ENCODE measurements at regions of chr11 and their contacts with region 1.

Region 1: DNA sequence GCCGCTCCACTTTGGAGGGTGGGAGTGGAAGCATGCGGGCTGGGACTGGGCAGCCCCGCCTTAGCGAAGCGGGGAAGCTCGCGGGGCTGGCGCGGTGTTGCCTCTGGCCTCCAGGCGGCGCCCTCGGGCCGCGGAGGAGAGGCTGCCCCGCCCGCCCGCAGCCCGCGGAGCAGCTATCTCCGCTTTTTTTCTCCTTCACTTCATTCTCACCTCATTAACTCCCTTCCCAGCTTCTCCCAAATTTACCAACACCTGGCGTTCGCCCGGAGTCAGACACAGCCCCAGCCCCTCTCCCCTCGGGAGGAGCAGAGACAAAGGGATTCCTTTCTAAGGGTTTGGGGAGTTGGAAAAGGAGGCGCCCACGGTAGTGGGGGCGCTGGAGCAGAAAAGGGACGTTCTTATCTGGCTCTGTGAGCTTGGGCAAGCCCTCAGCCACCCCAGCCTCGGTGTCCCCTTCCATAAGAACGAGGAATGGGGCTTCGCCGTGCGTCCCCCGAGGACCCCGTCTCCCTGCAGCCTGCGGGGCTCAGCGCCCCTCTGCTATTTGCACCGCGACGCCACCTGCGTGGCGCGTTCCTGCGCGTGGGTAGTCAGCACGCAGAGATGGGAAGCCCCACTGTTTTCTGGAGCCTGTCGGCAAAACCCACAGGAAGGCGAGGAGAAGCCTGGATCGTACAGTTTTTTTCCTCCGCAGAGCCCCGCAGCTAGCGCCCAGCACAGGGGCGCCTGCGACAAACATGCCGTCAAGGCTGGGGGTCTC is 1.5 kb upstream of the WNT11 start:
- DNase-seq: peak; percentile 91 to 96
- H3K4me3 ChIP-seq: peak overlapping the region; percentile 70
- H3K4me3 Mint-ChIP-seq: peak overlapping the region; percentile 85
- H3K27ac Mint-ChIP-seq: peak overlapping the region; percentile 5
- H3K4me1 ChIP-seq: peaks cover 14% of the 10 kb centered on the region
- H3K4me1 Mint-ChIP-seq: peaks cover 22% of the 10 kb centered on the region
- H3K27me3 ChIP-seq: peaks cover 3% of the 10 kb centered on the region; the same call in 1 of the 2 replicates
- H3K27me3 Mint-ChIP-seq: peaks cover 10% of the 10 kb centered on the region
- CTCF ChIP-seq: peak; percentile 97 to 99

Region 2: GRCh38 chr11:75814686-75815344 is 393.0 kb before region 1 on chr11 and contains the start of gene UVRAG:
- CTCF ChIA-PET with region 1: interaction called, 3 read pairs
- POLR2A ChIA-PET with region 1: no interaction called
- intact Hi-C with region 1: loop called (anchors 5 kb)
- DNase-seq: peak; percentile 100
- H3K4me3 ChIP-seq: peak within 1 kb of the TSS; percentile 69
- H3K4me3 Mint-ChIP-seq: no peak within 1 kb of the TSS
- H3K27ac Mint-ChIP-seq: no peak within 1 kb of the TSS
- H3K4me1 ChIP-seq: peaks cover 10% of the 10 kb centered on the region
- H3K4me1 Mint-ChIP-seq: peaks cover 8% of the 10 kb centered on the region
- H3K27me3 ChIP-seq: no peaks in the 10 kb centered on the region
- H3K27me3 Mint-ChIP-seq: no peaks in the 10 kb centered on the region
- CTCF ChIP-seq: peak in 1 of 2 experiments; percentile 23
- total RNA-seq, gene UVRAG: 30.4 and 31.3 TPM in 2 replicates

Region 3: GRCh38 chr11:75982309-75982708 is 225.5 kb before region 1 on chr11:
- CTCF ChIA-PET with region 1: no interaction called
- POLR2A ChIA-PET with region 1: no interaction called
- intact Hi-C with region 1: no loop called
- DNase-seq: no peak
- H3K4me3 ChIP-seq: no peak overlapping the region
- H3K4me3 Mint-ChIP-seq: no peak overlapping the region
- H3K27ac Mint-ChIP-seq: no peak overlapping the region
- H3K4me1 ChIP-seq: no peaks in the 10 kb centered on the region
- H3K4me1 Mint-ChIP-seq: peaks cover 8% of the 10 kb centered on the region
- H3K27me3 ChIP-seq: no peaks in the 10 kb centered on the region
- H3K27me3 Mint-ChIP-seq: no peaks in the 10 kb centered on the region
- CTCF ChIP-seq: no peak

Region 4: GRCh38 chr11:76102802-76103201 is 105.0 kb before region 1 on chr11:
- CTCF ChIA-PET with region 1: no interaction called
- POLR2A ChIA-PET with region 1: no interaction called
- intact Hi-C with region 1: no loop called
- DNase-seq: no peak
- H3K4me3 ChIP-seq: no peak overlapping the region
- H3K4me3 Mint-ChIP-seq: no peak overlapping the region
- H3K27ac Mint-ChIP-seq: no peak overlapping the region
- H3K4me1 ChIP-seq: no peaks in the 10 kb centered on the region
- H3K4me1 Mint-ChIP-seq: peaks cover 7% of the 10 kb centered on the region
- H3K27me3 ChIP-seq: no peaks in the 10 kb centered on the region
- H3K27me3 Mint-ChIP-seq: no peaks in the 10 kb centered on the region
- CTCF ChIP-seq: no peak

Region 5: GRCh38 chr11:76152086-76152681 is 55.6 kb before region 1 on chr11:
- CTCF ChIA-PET with region 1: interaction called, 8 read pairs
- POLR2A ChIA-PET with region 1: interaction called, 3 read pairs
- intact Hi-C with region 1: loop called (anchors 2 kb)
- DNase-seq: peak; percentile 67 to 77
- H3K4me3 ChIP-seq: no peak overlapping the region
- H3K4me3 Mint-ChIP-seq: peak overlapping the region; percentile 56
- H3K27ac Mint-ChIP-seq: peak overlapping the region; percentile 90
- H3K4me1 ChIP-seq: peaks cover 79% of the 10 kb centered on the region
- H3K4me1 Mint-ChIP-seq: peaks cover 63% of the 10 kb centered on the region
- H3K27me3 ChIP-seq: no peaks in the 10 kb centered on the region
- H3K27me3 Mint-ChIP-seq: no peaks in the 10 kb centered on the region
- CTCF ChIP-seq: peak in 1 of 2 experiments; percentile 29

Region 6: GRCh38 chr11:76318744-76319384 is 111.0 kb after region 1 on chr11:
- CTCF ChIA-PET with region 1: interaction called, 170 read pairs
- POLR2A ChIA-PET with region 1: interaction called, 4 read pairs
- intact Hi-C with region 1: loop called (anchors 1 kb)
- DNase-seq: peak; percentile 90 to 94
- H3K4me3 ChIP-seq: no peak overlapping the region
- H3K4me3 Mint-ChIP-seq: no peak overlapping the region
- H3K27ac Mint-ChIP-seq: no peak overlapping the region
- H3K4me1 ChIP-seq: peaks cover 12% of the 10 kb centered on the region
- H3K4me1 Mint-ChIP-seq: no peaks in the 10 kb centered on the region
- H3K27me3 ChIP-seq: no peaks in the 10 kb centered on the region
- H3K27me3 Mint-ChIP-seq: no peaks in the 10 kb centered on the region
- CTCF ChIP-seq: peak; percentile 99

Region 7: DNA sequence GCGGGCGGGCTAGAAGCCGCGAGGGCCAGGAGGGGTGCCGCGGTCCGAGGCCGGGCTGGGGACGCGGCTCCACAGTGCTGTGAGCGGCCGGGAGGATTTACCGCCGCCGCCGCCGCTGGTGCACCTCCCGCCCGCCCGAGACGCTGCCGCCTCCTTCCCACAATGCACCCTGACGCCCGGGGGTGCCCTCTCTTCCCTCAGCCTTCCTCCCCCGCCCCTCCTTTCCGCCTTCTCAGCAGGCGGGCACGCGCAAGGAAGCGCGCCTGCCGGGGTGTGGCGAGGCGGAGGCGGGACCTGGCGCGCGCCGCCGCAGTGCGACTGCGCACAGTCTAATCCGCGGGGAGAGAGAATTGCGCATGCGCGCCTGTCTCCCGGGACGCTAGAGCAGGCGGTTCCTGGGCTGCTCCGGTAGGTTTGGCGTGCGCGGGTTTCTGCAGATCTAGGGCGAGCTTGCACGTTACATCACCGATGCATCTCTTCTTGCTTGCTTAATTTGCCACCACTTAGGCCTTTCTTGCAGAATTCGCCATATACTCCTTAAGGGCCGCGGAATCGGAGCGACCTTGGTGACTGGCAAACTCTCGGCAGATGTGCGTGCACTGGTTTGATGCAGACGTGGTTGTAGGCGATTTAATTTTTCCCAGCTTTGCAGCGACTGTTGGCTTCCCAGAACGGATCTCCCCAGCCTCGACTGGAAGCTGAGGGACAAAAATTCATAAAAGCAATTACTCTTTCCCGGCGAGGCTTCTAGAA is 173.3 kb after region 1 on chr11 and contains the starts of genes GVQW3 and THAP12:
- CTCF ChIA-PET with region 1: interaction called, 10 read pairs
- POLR2A ChIA-PET with region 1: no interaction called
- intact Hi-C with region 1: loop called (anchors 2 kb)
- DNase-seq: peak; percentile 100
- H3K4me3 ChIP-seq: peak within 1 kb of the TSS; percentile 75
- H3K4me3 Mint-ChIP-seq: peak within 1 kb of the TSS; percentile 92
- H3K27ac Mint-ChIP-seq: peak within 1 kb of the TSS; percentile 68
- H3K4me1 ChIP-seq: peaks cover 28% of the 10 kb centered on the region
- H3K4me1 Mint-ChIP-seq: peaks cover 41% of the 10 kb centered on the region
- H3K27me3 ChIP-seq: no peaks in the 10 kb centered on the region
- H3K27me3 Mint-ChIP-seq: no peaks in the 10 kb centered on the region
- CTCF ChIP-seq: peak in 1 of 2 experiments; percentile 27
- total RNA-seq, gene GVQW3: 13.0 and 15.8 TPM in 2 replicates
- total RNA-seq, gene THAP12: 99.9 and 102 TPM in 2 replicates

Region 8: GRCh38 chr11:76512851-76513653 is 305.2 kb after region 1 on chr11:
- CTCF ChIA-PET with region 1: interaction called, 5 read pairs
- POLR2A ChIA-PET with region 1: no interaction called
- intact Hi-C with region 1: loop called (anchors 2 kb)
- DNase-seq: peak in 1 of 2 experiments; percentile 32
- H3K4me3 ChIP-seq: no peak overlapping the region
- H3K4me3 Mint-ChIP-seq: no peak overlapping the region
- H3K27ac Mint-ChIP-seq: no peak overlapping the region
- H3K4me1 ChIP-seq: no peaks in the 10 kb centered on the region
- H3K4me1 Mint-ChIP-seq: peaks cover 9% of the 10 kb centered on the region
- H3K27me3 ChIP-seq: no peaks in the 10 kb centered on the region
- H3K27me3 Mint-ChIP-seq: no peaks in the 10 kb centered on the region
- CTCF ChIP-seq: peak; percentile 41 to 43

Region 9: GRCh38 chr11:76721755-76722677 is 514.2 kb after region 1 on chr11:
- CTCF ChIA-PET with region 1: interaction called, 10 read pairs
- POLR2A ChIA-PET with region 1: no interaction called
- intact Hi-C with region 1: no loop called
- DNase-seq: peak; percentile 85 to 91
- H3K4me3 ChIP-seq: no peak overlapping the region
- H3K4me3 Mint-ChIP-seq: no peak overlapping the region
- H3K27ac Mint-ChIP-seq: no peak overlapping the region
- H3K4me1 ChIP-seq: 0 out of 2 replicates have a peak, but pooled peaks cover 7% of the 10 kb centered on the region
- H3K4me1 Mint-ChIP-seq: peaks cover 5% of the 10 kb centered on the region
- H3K27me3 ChIP-seq: no peaks in the 10 kb centered on the region; the same call in 1 of the 2 replicates
- H3K27me3 Mint-ChIP-seq: peaks cover 5% of the 10 kb centered on the region
- CTCF ChIP-seq: peak; percentile 98